ENCODE measurements at regions of chr11 and their contacts with region 1.

Region 1: GRCh38 chr11:118497831-118498230 is 29.4 kb upstream of the TTC36 start:
- DNase-seq: no peak
- H3K4me3 ChIP-seq: no peak overlapping the region
- H3K27ac ChIP-seq: no peak overlapping the region
- H3K4me1 ChIP-seq: no peaks in the 10 kb centered on the region
- H3K27me3 ChIP-seq: no peaks in the 10 kb centered on the region
- CTCF ChIP-seq: no peak
- POLR2A ChIP-seq: no peak

Region 2: GRCh38 chr11:117796872-117797529 is 700.8 kb before region 1 on chr11 and contains the start of gene DSCAML1:
- intact Hi-C with region 1: no loop called
- DNase-seq: peak; percentile 33
- H3K4me3 ChIP-seq: peak within 1 kb of the TSS; percentile 15 to 41
- H3K27ac ChIP-seq: no peak within 1 kb of the TSS
- H3K4me1 ChIP-seq: peaks cover 11% of the 10 kb centered on the region
- H3K27me3 ChIP-seq: no peaks in the 10 kb centered on the region
- CTCF ChIP-seq: no peak
- POLR2A ChIP-seq: no peak
- total RNA-seq, gene DSCAML1: 3.0 to 6.1 TPM

Region 3: GRCh38 chr11:118224511-118225188 is 273.2 kb before region 1 on chr11 and contains the start of gene JAML:
- intact Hi-C with region 1: no loop called
- DNase-seq: no peak
- H3K4me3 ChIP-seq: no peak within 1 kb of the TSS
- H3K27ac ChIP-seq: no peak within 1 kb of the TSS
- H3K4me1 ChIP-seq: no peaks in the 10 kb centered on the region
- H3K27me3 ChIP-seq: no peaks in the 10 kb centered on the region
- CTCF ChIP-seq: no peak
- POLR2A ChIP-seq: no peak
- total RNA-seq, gene JAML: 1.9 to 3.5 TPM

Region 4: GRCh38 chr11:118401151-118401878 is 96.5 kb before region 1 on chr11 and contains the start of gene ATP5MG:
- intact Hi-C with region 1: loop called (anchors 10 kb)
- DNase-seq: peak; percentile 94
- H3K4me3 ChIP-seq: peak within 1 kb of the TSS; percentile 87 to 99
- H3K27ac ChIP-seq: peak within 1 kb of the TSS; percentile 86 to 88
- H3K4me1 ChIP-seq: peaks cover 13% of the 10 kb centered on the region
- H3K27me3 ChIP-seq: no peaks in the 10 kb centered on the region
- CTCF ChIP-seq: no peak
- POLR2A ChIP-seq: no peak
- total RNA-seq, gene ATP5MG: 35.9 to 40.0 TPM

Region 5: GRCh38 chr11:118462178-118462577 is 35.7 kb before region 1 on chr11:
- intact Hi-C with region 1: no loop called
- DNase-seq: no peak
- H3K4me3 ChIP-seq: no peak overlapping the region
- H3K27ac ChIP-seq: no peak overlapping the region
- H3K4me1 ChIP-seq: no peaks in the 10 kb centered on the region
- H3K27me3 ChIP-seq: no peaks in the 10 kb centered on the region
- CTCF ChIP-seq: no peak
- POLR2A ChIP-seq: no peak

Region 6: DNA sequence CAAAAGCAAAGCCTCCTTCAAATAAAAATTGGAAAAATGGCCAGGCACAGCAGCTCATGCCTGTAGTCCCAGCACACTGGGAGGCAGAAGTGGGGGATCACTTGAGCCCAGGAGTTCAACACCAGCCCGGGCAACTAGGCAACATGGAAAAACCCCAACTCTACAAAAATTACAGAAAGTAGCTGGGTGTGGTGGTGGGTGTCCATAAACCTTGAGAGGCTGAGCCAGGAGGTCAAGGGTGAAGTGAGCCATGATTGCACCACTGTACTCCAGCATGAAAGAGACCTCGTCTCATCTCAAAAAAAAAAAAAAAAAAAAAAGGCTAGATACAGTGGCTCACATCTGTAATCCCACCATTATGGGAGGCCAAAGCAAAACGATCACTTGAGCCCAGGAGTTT is 270.9 kb after region 1 on chr11:
- intact Hi-C with region 1: no loop called
- DNase-seq: no peak
- H3K4me3 ChIP-seq: no peak overlapping the region
- H3K27ac ChIP-seq: no peak overlapping the region
- H3K4me1 ChIP-seq: peaks cover 21% of the 10 kb centered on the region
- H3K27me3 ChIP-seq: no peaks in the 10 kb centered on the region
- CTCF ChIP-seq: no peak
- POLR2A ChIP-seq: no peak